Activated CD4-positive, alpha-beta T cell treated with anti-CD3 and anti-CD28 coated beads, Interleukin-2, amount 10 ng/mL, durations not matched to agents 24 days and 14 days (primary cell): ENCODE measurements at regions of chr3 and their contacts with region 1.

Region 1: GRCh38 chr3:60053526-60054265 is 1003.9 kb upstream of the CFAP20DC start:
- DNase-seq: peak; percentile 72
- H3K4me3 Mint-ChIP-seq: peak overlapping the region; percentile 61
- H3K27ac Mint-ChIP-seq: peak overlapping the region; percentile 93
- H3K4me1 Mint-ChIP-seq: peaks cover 78% of the 10 kb centered on the region
- H3K27me3 Mint-ChIP-seq: no peaks in the 10 kb centered on the region

Region 2: GRCh38 chr3:59235634-59236012 is 818.1 kb before region 1 on chr3:
- intact Hi-C with region 1: no loop called
- DNase-seq: peak; percentile 76
- H3K4me3 Mint-ChIP-seq: peak overlapping the region; percentile 4
- H3K27ac Mint-ChIP-seq: peak overlapping the region; percentile 66
- H3K4me1 Mint-ChIP-seq: peaks cover 17% of the 10 kb centered on the region
- H3K27me3 Mint-ChIP-seq: no peaks in the 10 kb centered on the region

Region 3: GRCh38 chr3:59771768-59772181 is 281.9 kb before region 1 on chr3:
- intact Hi-C with region 1: loop called (anchors 10 kb)
- DNase-seq: no peak
- H3K4me3 Mint-ChIP-seq: peak overlapping the region; percentile 56
- H3K27ac Mint-ChIP-seq: peak overlapping the region; percentile 67
- H3K4me1 Mint-ChIP-seq: peaks cover 39% of the 10 kb centered on the region
- H3K27me3 Mint-ChIP-seq: no peaks in the 10 kb centered on the region

Region 4: GRCh38 chr3:59935025-59935424 is 118.7 kb before region 1 on chr3:
- intact Hi-C with region 1: loop called (anchors 5 kb)
- DNase-seq: peak; percentile 62
- H3K4me3 Mint-ChIP-seq: peak overlapping the region; percentile 58
- H3K27ac Mint-ChIP-seq: peak overlapping the region; percentile 88
- H3K4me1 Mint-ChIP-seq: peaks cover 28% of the 10 kb centered on the region
- H3K27me3 Mint-ChIP-seq: no peaks in the 10 kb centered on the region

Region 5: DNA sequence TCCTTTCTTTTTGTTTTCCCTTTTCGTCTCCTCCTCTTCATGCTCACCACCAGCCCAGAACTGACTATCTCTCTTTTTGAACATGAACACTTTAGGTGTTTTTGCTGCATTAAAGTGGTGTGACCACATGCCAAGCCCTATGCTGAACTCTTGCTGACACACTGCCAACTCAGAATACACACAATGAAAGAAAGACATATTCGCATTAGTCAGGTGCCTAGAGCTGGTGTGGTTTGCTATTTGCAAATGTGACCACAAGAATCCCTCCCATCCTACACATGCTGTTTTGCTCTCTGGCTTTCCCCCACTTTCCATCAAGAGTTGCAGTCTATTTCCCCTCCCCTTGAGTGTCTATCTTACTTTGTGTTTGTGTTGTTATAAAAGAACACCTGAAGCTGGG is 36.1 kb before region 1 on chr3:
- intact Hi-C with region 1: loop called (anchors 1 kb)
- DNase-seq: peak; percentile 89
- H3K4me3 Mint-ChIP-seq: peak overlapping the region; percentile 73
- H3K27ac Mint-ChIP-seq: peak overlapping the region; percentile 94
- H3K4me1 Mint-ChIP-seq: peaks cover 51% of the 10 kb centered on the region
- H3K27me3 Mint-ChIP-seq: no peaks in the 10 kb centered on the region

Region 6: GRCh38 chr3:60064210-60065178 is 10.8 kb after region 1 on chr3:
- intact Hi-C with region 1: loop called (anchors 1 kb)
- DNase-seq: peak; percentile 71
- H3K4me3 Mint-ChIP-seq: peak overlapping the region; percentile 43
- H3K27ac Mint-ChIP-seq: peak overlapping the region; percentile 89
- H3K4me1 Mint-ChIP-seq: peaks cover 61% of the 10 kb centered on the region
- H3K27me3 Mint-ChIP-seq: no peaks in the 10 kb centered on the region

Region 7: GRCh38 chr3:61520966-61521628 is 1467.4 kb after region 1 on chr3:
- intact Hi-C with region 1: loop called (anchors 10 kb)
- DNase-seq: peak; percentile 84
- H3K4me3 Mint-ChIP-seq: peak overlapping the region; percentile 48
- H3K27ac Mint-ChIP-seq: peak overlapping the region; percentile 80
- H3K4me1 Mint-ChIP-seq: peaks cover 37% of the 10 kb centered on the region
- H3K27me3 Mint-ChIP-seq: no peaks in the 10 kb centered on the region